GM10248 (cell line): ENCODE measurements at regions of chr1 and their contacts with region 1.

Region 1: GRCh38 chr1:236027104-236027503 is 37.8 kb downstream of the NID1 start:
- DNase-seq: no peak
- CTCF ChIP-seq: no peak

Region 2: DNA sequence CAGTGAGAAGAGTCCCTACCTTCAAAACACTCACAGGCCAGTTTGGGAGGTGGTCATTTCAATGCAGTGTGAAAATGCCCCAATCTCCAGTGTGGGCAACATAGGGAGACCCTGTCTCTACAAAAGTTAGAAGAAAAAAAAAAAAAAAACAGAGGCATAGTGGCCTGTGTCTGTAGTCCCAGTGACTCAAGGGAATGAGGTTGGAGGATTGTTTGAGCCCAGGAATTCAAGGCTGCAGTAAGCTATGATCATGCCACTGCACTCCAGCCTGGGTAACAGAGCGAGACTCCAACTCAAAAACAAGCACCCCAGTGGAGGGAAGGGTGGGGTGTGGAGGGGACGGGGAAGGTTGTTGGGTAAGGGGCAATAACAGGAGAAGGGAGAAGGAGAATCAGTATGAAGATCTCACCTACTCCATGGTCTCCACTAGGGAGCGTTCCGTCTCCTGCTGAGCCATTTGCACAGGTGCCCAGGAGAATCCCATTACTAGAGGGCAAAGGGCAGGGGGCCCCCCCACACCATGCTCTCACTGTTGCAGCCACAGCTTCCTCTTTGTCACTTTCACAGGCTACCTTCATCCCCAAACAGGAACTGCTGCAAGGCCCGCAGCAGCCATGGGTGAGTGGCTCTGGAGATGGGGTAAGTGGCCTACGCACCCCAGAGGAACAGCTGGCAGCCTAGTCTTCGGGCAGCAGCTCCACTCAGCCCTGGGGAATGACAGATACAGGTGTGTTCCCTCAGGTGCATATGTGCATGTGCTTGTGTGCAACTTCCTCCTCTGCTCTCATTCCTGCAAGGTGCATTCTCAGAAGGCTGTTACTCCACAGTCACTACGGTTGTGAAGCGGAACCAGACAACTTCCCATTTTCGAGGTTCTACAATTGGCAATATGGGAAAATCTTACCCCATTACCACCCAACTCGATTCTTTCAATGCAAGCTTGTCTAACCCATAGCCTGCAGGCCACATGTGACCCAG is 72.5 kb before region 1 on chr1:
- CTCF ChIA-PET with region 1: no interaction called
- POLR2A ChIA-PET with region 1: no interaction called
- DNase-seq: peak; percentile 83
- CTCF ChIP-seq: peak; percentile 23

Region 3: DNA sequence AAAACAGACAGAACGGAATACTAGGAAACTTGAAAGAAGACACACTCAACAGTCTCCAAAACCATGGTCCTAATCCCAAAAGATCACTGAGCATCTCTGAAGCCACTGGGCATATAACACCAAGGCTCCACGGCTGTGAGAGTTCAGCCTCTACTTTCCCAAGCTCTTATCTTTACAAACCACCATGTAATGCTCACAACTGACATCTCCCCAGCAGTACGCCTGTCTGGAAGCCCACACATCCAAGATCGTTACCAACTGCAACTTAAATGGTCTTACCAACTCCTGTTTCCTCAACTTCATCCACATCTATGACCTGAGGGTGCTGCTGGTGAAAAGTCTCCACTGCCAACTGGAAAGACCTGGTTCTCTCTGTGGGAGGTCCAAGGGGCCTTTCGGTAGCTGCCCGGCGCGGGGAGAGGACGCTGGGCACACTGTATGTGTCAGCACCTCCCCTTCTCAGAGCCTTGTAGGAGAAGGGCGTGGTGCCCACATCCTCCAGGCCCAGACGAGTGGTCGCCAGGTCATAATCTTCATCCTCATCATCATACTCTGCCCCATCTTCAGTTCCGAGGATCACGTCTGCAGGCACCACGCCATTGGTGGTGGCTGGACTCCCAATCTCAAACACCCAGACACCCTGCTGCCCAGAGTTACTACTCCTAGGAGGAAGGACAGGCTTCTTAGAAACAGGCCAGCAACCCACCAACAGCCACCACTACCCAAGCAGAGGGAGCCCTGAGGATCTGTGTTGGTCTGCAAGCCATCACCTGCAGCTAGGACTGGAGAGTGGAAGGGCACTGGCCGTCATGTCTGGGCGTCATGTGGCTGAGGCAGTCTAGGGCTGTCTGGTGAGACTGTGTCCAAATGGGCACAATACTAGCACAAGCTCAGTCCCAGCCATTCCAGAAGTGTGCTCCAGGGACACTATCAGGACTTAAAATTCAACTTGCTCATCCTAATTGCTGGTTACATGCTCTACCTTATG is 14.8 kb after region 1 on chr1:
- CTCF ChIA-PET with region 1: interaction called, 15 read pairs
- POLR2A ChIA-PET with region 1: no interaction called
- DNase-seq: no peak
- CTCF ChIP-seq: no peak